PC-9 (cell line): ENCODE measurements at regions of chr2 and their contacts with region 1.

Region 1: GRCh38 chr2:202588647-202589581 is 45.9 kb upstream of the FAM117B start:
- DNase-seq: peak; percentile 36 to 45
- H3K4me3 ChIP-seq: no peak overlapping the region
- H3K27ac ChIP-seq: no peak overlapping the region
- H3K4me1 ChIP-seq: no peaks in the 10 kb centered on the region
- H3K27me3 ChIP-seq: no peaks in the 10 kb centered on the region
- CTCF ChIP-seq: peak; percentile 89

Region 2: GRCh38 chr2:201313362-201313761 is 1275.6 kb before region 1 on chr2:
- CTCF ChIA-PET with region 1: interaction called, 14 read pairs
- POLR2A ChIA-PET with region 1: no interaction called
- intact Hi-C with region 1: no loop called
- DNase-seq: no peak
- H3K4me3 ChIP-seq: no peak overlapping the region
- H3K27ac ChIP-seq: no peak overlapping the region
- H3K4me1 ChIP-seq: no peaks in the 10 kb centered on the region
- H3K27me3 ChIP-seq: no peaks in the 10 kb centered on the region
- CTCF ChIP-seq: no peak

Region 3: GRCh38 chr2:202599105-202599504 is 10.2 kb after region 1 on chr2:
- CTCF ChIA-PET with region 1: interaction called, 17 read pairs
- POLR2A ChIA-PET with region 1: no interaction called
- intact Hi-C with region 1: no loop called
- DNase-seq: no peak
- H3K4me3 ChIP-seq: no peak overlapping the region
- H3K27ac ChIP-seq: no peak overlapping the region
- H3K4me1 ChIP-seq: no peaks in the 10 kb centered on the region
- H3K27me3 ChIP-seq: no peaks in the 10 kb centered on the region
- CTCF ChIP-seq: no peak

Region 4: DNA sequence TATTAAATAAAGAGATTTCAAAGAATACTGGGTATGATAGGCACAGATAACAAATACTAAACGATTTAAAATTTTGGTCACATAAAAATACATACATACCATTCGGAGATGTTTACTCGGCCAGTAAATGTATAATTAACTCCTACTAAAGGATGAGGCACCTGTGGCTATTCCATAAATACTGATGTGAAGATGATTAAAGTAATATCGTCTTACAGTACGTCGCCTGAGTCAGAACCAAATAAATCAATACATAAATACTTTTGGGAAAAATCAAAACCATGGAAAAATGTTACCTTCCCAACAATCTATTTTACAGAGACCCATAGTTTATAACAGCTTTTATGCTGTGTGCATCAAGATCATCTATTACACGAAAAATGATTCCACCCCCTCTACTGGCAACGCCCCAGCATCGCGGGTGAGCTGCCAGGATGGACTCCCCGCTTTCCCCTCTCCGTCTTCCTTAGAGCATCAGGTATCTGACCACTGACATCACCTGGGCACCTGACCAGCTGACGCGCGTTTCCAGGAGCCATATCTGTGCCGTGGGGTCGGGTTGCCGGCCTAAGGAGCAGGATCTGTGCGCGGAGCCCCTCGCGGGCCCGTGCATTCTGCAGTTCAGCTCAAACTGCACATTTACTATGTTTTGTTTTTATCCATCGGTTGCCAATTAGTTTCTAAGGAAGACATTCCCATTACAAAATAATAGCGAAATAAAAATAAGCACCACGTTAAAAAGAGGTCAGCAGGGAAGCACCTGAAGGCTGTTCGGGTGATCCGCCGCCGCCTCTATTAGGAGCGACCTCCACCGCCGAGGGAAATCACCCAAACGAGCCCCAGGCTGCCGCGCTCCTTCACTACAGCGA is 281.8 kb after region 1 on chr2:
- CTCF ChIA-PET with region 1: no interaction called
- POLR2A ChIA-PET with region 1: no interaction called
- intact Hi-C with region 1: loop called (anchors 2 kb)
- DNase-seq: peak; percentile 47 to 68
- H3K4me3 ChIP-seq: peak overlapping the region; percentile 72
- H3K27ac ChIP-seq: no peak overlapping the region
- H3K4me1 ChIP-seq: no peaks in the 10 kb centered on the region
- H3K27me3 ChIP-seq: no peaks in the 10 kb centered on the region
- CTCF ChIP-seq: peak; percentile 53